GM12878 (cell line): ENCODE measurements at regions of chr2 and their contacts with region 1.

Region 1: GRCh38 chr2:190088917-190089316 is 26.4 kb upstream of the MSTN start:
- DNase-seq: peak; percentile 20
- ATAC-seq: peak; percentile 91
- H3K4me3 ChIP-seq: no peak overlapping the region
- H3K27ac ChIP-seq: no peak overlapping the region
- H3K4me1 ChIP-seq: no peaks in the 10 kb centered on the region
- H3K27me3 ChIP-seq: no peaks in the 10 kb centered on the region
- CTCF ChIP-seq: peak; percentile 60 to 82 (median 63); a peak in 5 of 6 replicates
- EP300 ChIP-seq: no peak
- POLR2A ChIP-seq: no peak
- RAD21 ChIP-seq: peak; percentile 93

Region 2: GRCh38 chr2:189762551-189763298 is 326.2 kb before region 1 on chr2 and contains the start of gene OSGEPL1:
- CTCF ChIA-PET with region 1: no interaction called
- POLR2A ChIA-PET with region 1: no interaction called
- RAD21 ChIA-PET with region 1: no interaction called
- SMC1A ChIA-PET with region 1: no interaction called
- in situ Hi-C with region 1: no loop called
- intact Hi-C with region 1: no loop called
- DNase-seq: peak; percentile 87
- ATAC-seq: peak; percentile 97
- H3K4me3 ChIP-seq: peak within 1 kb of the TSS; percentile 97
- H3K27ac ChIP-seq: peak within 1 kb of the TSS; percentile 91
- H3K4me1 ChIP-seq: peaks cover 5% of the 10 kb centered on the region; the same call in 1 of the 2 replicates
- H3K27me3 ChIP-seq: no peaks in the 10 kb centered on the region
- CTCF ChIP-seq: peak; percentile 50 to 60 (median 53); a peak in 5 of 6 replicates
- EP300 ChIP-seq: no peak
- POLR2A ChIP-seq: peak; percentile 91
- RAD21 ChIP-seq: peak; percentile 16; the same call in 1 of the 2 replicates
- polyA plus RNA-seq, gene OSGEPL1: 9.4 to 11.5 TPM

Region 3: DNA sequence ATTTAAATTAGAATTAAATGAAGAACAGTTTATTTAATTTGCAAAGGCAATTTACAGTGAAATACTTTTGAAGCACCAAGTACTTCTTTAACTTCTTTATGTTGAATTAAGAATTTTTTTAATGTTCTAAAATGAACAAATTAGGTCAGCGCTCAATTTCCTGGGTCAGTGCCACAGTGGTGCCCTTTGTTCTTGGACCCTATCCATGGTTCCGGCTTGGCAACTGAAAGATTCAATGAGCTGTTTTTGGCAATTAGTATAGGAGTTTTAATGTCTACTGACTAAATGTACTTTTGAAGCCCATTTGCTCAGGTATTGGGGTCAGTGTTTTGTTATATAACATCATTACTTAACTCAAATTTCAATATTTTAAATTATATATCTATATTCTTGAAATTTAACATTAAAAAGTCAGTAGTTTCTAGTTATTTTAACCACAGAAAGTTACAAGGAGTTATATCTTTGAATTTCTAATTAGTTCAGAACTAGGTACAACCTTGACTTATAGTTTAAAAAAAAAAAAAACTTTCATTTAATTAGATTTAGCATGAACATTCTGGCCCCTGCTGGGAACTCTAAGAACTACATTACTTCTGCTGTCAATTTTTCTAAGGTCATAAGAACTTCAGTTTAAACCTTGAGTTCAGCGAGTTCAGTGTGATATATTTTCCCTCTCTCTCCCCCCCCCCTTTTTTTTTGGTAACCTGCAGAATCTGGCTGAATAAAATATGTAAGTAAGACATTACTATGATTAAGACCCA is 18.8 kb before region 1 on chr2:
- CTCF ChIA-PET with region 1: interaction called, 14 read pairs
- POLR2A ChIA-PET with region 1: no interaction called
- RAD21 ChIA-PET with region 1: interaction called, 6 read pairs
- SMC1A ChIA-PET with region 1: interaction called, 5 read pairs
- in situ Hi-C with region 1: no loop called
- intact Hi-C with region 1: no loop called
- DNase-seq: no peak
- ATAC-seq: peak; percentile 70
- H3K4me3 ChIP-seq: no peak overlapping the region
- H3K27ac ChIP-seq: no peak overlapping the region
- H3K4me1 ChIP-seq: no peaks in the 10 kb centered on the region
- H3K27me3 ChIP-seq: no peaks in the 10 kb centered on the region
- CTCF ChIP-seq: peak; percentile 53 to 74 (median 55)
- EP300 ChIP-seq: no peak
- POLR2A ChIP-seq: no peak
- RAD21 ChIP-seq: peak; percentile 93

Region 4: DNA sequence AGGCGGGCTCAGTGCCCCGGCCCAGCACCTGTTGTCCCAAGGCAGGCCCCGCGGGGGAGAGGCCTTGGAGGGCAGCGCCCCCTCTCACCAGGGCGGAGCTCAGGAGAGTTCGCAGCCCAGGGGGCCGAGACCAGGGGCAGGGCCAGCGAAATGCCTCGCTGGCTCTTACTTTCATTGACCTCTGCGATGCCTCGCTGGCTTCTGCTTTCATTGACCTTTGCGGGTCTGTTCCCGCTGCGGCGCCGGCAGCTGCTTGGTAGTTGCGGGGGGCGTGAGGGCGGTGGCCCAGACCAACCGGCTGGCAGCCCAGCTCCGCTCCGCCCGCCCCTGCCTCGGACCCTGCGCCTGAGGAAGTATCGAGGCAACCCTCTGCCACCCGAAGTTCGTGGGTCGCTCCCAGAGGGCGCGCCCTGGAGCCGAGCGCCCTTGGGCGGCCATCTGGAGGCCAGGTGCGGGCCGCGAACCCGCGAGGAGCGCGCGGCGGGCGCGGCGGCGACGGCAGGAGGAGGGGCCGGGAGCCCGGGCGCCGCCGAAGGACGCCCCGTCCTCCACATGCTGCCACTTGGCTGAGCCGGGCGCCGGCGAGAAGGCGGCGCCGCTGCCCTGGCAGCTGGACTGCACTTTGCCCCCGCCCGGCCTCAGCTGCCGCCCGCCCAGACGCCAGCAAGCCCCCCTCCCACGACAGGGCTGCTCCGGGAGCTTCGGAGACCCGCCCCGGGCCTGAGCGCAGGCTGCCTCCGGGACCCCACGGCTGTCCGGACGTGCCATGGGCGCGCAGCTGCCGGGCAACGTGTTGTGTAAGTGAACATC is 91.6 kb after region 1 on chr2:
- CTCF ChIA-PET with region 1: interaction called, 73 read pairs
- POLR2A ChIA-PET with region 1: interaction called, 5 read pairs
- RAD21 ChIA-PET with region 1: interaction called, 56 read pairs
- SMC1A ChIA-PET with region 1: interaction called, 42 read pairs
- in situ Hi-C with region 1: no loop called
- intact Hi-C with region 1: loop called (anchors 1 kb)
- DNase-seq: no peak
- ATAC-seq: peak; percentile 86
- H3K4me3 ChIP-seq: peak overlapping the region; percentile 73
- H3K27ac ChIP-seq: peak overlapping the region; percentile 11; the same call in 1 of the 2 replicates
- H3K4me1 ChIP-seq: peaks cover 16% of the 10 kb centered on the region
- H3K27me3 ChIP-seq: no peaks in the 10 kb centered on the region
- CTCF ChIP-seq: peak in 2 of 3 experiments; percentile 65 to 67; a peak in 5 of 6 replicates
- EP300 ChIP-seq: no peak
- POLR2A ChIP-seq: peak; percentile 60
- RAD21 ChIP-seq: no peak

Region 5: GRCh38 chr2:190319555-190320498 is 230.9 kb after region 1 on chr2 and contains the start of gene HIBCH:
- CTCF ChIA-PET with region 1: interaction called, 34 read pairs
- POLR2A ChIA-PET with region 1: no interaction called
- RAD21 ChIA-PET with region 1: interaction called, 5 read pairs
- SMC1A ChIA-PET with region 1: interaction called, 6 read pairs
- in situ Hi-C with region 1: no loop called
- intact Hi-C with region 1: no loop called
- DNase-seq: peak; percentile 81
- ATAC-seq: peak; percentile 94
- H3K4me3 ChIP-seq: peak within 1 kb of the TSS; percentile 77
- H3K27ac ChIP-seq: peak within 1 kb of the TSS; percentile 76
- H3K4me1 ChIP-seq: peaks cover 9% of the 10 kb centered on the region
- H3K27me3 ChIP-seq: no peaks in the 10 kb centered on the region
- CTCF ChIP-seq: peak; percentile 53 to 61 (median 58)
- EP300 ChIP-seq: no peak
- POLR2A ChIP-seq: peak; percentile 89
- RAD21 ChIP-seq: no peak
- polyA plus RNA-seq, gene HIBCH: 64.6 to 73.8 TPM

Region 6: DNA sequence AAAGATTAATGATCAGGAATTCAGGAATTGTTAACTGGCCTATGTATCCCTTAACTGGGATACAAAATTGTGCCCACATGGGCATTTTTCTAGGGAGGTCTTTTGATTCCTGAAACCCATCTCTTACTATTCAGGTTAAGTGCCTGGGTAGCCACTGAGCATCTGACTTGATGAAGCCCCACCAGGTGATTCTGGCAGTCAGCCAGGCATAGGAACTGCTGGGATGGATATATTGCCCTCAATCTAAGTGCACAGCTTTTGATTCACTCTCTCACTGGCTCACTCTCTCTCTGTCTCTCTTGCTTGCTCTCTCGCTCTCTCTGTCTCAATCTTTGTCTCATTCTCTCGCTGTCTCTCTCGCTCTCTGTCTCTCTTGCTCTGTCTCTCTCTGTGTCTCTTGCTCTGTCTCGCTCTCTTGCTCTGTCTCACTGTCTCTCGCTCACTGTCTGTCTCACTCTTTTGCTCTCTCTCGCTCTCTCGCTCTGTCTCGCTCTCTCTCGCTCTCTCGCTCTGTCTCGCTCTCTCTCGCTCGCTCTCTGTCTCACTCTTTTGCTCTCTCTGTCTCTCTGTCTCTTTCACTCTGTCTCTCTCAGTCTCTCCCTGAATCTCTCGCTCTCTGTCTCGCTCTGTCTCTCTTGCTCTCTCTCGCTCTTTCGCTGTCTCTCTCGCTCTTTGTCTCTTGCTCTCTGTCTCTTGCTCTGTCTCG is 276.7 kb after region 1 on chr2:
- CTCF ChIA-PET with region 1: interaction called, 11 read pairs
- POLR2A ChIA-PET with region 1: no interaction called
- RAD21 ChIA-PET with region 1: interaction called, 4 read pairs
- SMC1A ChIA-PET with region 1: interaction called, 7 read pairs
- in situ Hi-C with region 1: loop called (anchors 5 kb)
- intact Hi-C with region 1: no loop called
- DNase-seq: no peak
- ATAC-seq: no peak
- H3K4me3 ChIP-seq: no peak overlapping the region
- H3K27ac ChIP-seq: no peak overlapping the region
- H3K4me1 ChIP-seq: no peaks in the 10 kb centered on the region
- H3K27me3 ChIP-seq: no peaks in the 10 kb centered on the region
- CTCF ChIP-seq: no peak
- EP300 ChIP-seq: no peak
- POLR2A ChIP-seq: no peak
- RAD21 ChIP-seq: no peak

Region 7: DNA sequence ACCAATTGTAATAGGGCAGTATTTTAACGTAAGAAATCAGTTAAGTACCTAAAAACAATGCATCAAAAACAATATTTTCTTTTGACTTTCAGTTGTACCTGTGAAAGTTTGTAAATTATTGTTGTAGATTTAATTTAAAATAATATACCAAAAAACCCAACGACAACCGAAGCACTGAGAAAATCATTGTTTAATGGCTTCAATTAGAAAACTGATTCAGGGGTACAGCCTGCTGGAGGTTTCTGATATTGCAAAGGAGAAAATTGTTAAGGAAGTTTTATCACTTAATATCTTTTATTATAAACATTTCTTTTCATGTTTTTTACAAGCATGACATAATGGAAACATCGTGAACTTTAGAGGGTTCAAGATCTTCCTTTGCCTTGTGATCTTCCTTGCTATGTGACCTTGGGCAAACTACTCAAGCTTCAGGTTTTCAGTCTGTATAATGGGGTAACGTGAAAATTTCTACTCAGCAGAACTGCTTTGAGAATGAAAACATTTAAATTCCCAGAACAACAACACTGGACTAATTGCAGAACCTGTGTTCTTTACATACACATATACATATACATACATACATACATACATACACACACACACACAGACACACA is 715.4 kb after region 1 on chr2:
- CTCF ChIA-PET with region 1: interaction called, 21 read pairs
- POLR2A ChIA-PET with region 1: no interaction called
- RAD21 ChIA-PET with region 1: no interaction called
- SMC1A ChIA-PET with region 1: interaction called, 3 read pairs
- in situ Hi-C with region 1: loop called (anchors 5 kb)
- intact Hi-C with region 1: loop called (anchors 2 kb)
- DNase-seq: no peak
- ATAC-seq: no peak
- H3K4me3 ChIP-seq: no peak overlapping the region
- H3K27ac ChIP-seq: no peak overlapping the region
- H3K4me1 ChIP-seq: peaks cover 5% of the 10 kb centered on the region; the same call in 1 of the 2 replicates
- H3K27me3 ChIP-seq: no peaks in the 10 kb centered on the region
- CTCF ChIP-seq: peak; percentile 34 to 63 (median 48); a peak in 5 of 6 replicates
- EP300 ChIP-seq: no peak
- POLR2A ChIP-seq: no peak
- RAD21 ChIP-seq: peak; percentile 89